Psoas muscle (tissue), 8 donors: ENCODE measurements at regions of chr5 and their contacts with region 1.

Region 1: GRCh38 chr5:72908664-72909063 is 47.2 kb upstream of the FCHO2 start:
- DNase-seq: no peak
- ATAC-seq: peak in 1 of 4 donors; percentile 21
- H3K4me3 ChIP-seq: no peak overlapping the region
- H3K27ac ChIP-seq: no peak overlapping the region
- H3K4me1 ChIP-seq: no peaks in the 10 kb centered on the region
- H3K27me3 ChIP-seq: no peaks in the 10 kb centered on the region
- CTCF ChIP-seq: no peak

Region 2: GRCh38 chr5:72860499-72860898 is 48.2 kb before region 1 on chr5:
- intact Hi-C with region 1: loop called in 1 of 2 experiments (anchors 5 kb)
- DNase-seq: peak in 1 of 2 donors; percentile 66
- ATAC-seq: peak; percentile 90 to 96 (median 94)
- H3K4me3 ChIP-seq: no peak overlapping the region
- H3K27ac ChIP-seq: peak overlapping the region; percentile 59
- H3K4me1 ChIP-seq: peaks cover 22% of the 10 kb centered on the region
- H3K27me3 ChIP-seq: no peaks in the 10 kb centered on the region
- CTCF ChIP-seq: no peak

Region 3: DNA sequence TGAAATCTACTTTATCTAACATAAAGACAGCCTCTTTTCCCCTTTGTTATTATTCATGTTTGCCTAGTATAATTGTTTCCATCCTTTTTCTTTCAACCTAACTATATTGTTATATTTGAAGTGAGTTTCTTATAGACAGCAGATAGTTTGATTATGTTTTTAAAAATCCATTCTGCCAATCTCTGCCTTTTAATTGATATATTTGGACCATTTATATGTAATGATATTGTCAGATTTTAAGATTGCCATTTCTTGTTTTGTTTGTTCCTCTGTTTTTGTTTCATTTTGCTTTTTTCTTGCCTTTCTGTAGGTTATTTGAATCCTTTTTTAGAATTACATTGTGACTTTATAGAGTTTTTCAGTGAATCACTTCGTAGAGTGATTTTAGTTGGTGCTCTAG is 137.0 kb after region 1 on chr5:
- intact Hi-C with region 1: no loop called
- DNase-seq: no peak
- ATAC-seq: no peak
- H3K4me3 ChIP-seq: no peak overlapping the region
- H3K27ac ChIP-seq: no peak overlapping the region
- H3K4me1 ChIP-seq: no peaks in the 10 kb centered on the region
- H3K27me3 ChIP-seq: no peaks in the 10 kb centered on the region
- CTCF ChIP-seq: no peak

Region 4: DNA sequence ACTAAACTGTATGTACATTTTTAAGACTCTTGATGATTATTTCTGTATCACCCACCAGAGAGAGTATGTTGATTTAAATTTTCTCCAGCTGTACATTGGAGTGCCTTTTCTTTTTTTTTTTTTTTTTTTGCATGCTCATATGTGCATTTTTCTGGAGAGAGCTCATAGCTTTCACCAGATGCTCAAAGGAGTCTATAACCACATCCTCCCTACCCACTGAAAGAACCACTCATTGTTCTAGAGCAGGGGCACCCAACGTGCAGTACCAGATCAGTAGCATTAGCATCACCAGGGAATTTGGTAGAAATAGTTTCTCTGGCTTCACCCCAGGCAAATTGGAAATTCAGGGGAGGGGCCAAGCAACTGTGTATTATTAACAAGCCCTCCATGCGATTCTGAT is 157.8 kb after region 1 on chr5:
- intact Hi-C with region 1: loop called in 1 of 2 experiments (anchors 10 kb)
- DNase-seq: no peak
- ATAC-seq: no peak
- H3K4me3 ChIP-seq: no peak overlapping the region
- H3K27ac ChIP-seq: no peak overlapping the region
- H3K4me1 ChIP-seq: peaks cover 3% of the 10 kb centered on the region
- H3K27me3 ChIP-seq: no peaks in the 10 kb centered on the region
- CTCF ChIP-seq: no peak